Activated T-helper 2 cell treated with anti-CD3 and anti-CD28 coated beads, Interferon-gamma antibody, Interleukin-2, Interleukin-4, amounts not matched to agents 10 μg/mL and 5 μg/mL and 100 μg/mL, durations not matched to agents 14 hours and 24 hours and 36 hours (primary cell): ENCODE measurements at regions of chr1 and their contacts with region 1.

Region 1: GRCh38 chr1:156421062-156421938 is 52.3 kb downstream of the RHBG start:
- DNase-seq: peak; percentile 66
- H3K4me3 Mint-ChIP-seq: peak overlapping the region; percentile 59
- H3K27ac Mint-ChIP-seq: no peak overlapping the region
- H3K4me1 Mint-ChIP-seq: peaks cover 14% of the 10 kb centered on the region
- H3K27me3 Mint-ChIP-seq: peaks cover 86% of the 10 kb centered on the region

Region 2: DNA sequence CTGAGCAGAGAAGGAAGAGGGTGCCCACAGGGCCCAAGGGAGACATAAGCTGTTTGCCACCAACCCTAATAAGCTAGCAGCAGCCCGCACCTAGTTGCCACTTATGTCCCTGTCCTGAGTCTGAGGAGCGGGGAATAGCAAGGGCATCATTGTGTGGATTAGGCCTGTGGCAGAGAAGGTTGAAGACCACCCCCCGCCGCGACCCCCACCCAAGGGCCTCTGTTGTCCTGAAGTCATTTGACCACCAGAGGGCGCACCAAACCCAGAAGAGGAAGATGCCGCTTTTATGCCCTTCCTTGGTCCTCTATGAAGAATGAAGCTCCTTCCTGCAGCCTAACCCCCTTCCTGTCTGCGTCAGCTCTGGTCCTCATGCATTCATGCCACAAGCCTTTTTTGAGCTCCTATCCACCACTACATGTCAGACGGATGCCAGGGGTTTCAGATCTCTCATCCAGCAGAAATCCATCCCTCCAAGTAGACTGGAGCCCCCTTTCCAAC is 35.7 kb before region 1 on chr1:
- intact Hi-C with region 1: loop called (anchors 5 kb)
- DNase-seq: peak; percentile 61
- H3K4me3 Mint-ChIP-seq: no peak overlapping the region
- H3K27ac Mint-ChIP-seq: no peak overlapping the region
- H3K4me1 Mint-ChIP-seq: peaks cover 4% of the 10 kb centered on the region
- H3K27me3 Mint-ChIP-seq: peaks cover 34% of the 10 kb centered on the region

Region 3: DNA sequence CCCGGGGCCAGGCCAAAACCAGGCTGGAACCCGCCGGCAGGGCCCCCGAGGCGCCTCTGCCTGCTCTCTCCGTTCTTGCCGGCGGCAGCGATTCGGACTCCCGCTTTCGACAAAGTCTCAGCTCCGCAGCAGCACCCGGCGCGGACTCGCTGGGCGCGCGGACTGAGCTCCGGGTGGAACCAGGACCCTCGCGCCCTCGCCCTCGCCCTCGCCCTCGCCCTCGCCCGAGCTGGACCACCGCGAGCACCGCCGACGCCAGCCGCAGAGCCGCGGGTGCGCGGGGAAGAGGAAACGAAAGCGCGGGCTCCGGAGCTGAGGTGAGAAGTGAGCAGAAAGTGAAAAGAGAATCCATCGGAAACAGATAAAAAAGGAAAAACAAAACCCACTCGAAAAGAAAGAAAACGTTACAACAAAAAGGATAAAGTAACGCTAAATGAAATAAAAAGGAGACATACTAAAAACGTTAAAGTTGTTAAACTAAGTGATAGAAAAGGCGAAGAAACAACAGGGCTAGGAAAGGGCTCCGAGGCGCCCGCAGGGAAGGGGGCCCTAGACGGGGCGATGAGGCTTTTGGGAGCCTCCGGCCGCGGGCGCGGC is 14.3 kb after region 1 on chr1:
- intact Hi-C with region 1: loop called (anchors 2 kb)
- DNase-seq: peak; percentile 15
- H3K4me3 Mint-ChIP-seq: peak overlapping the region; percentile 70
- H3K27ac Mint-ChIP-seq: peak overlapping the region; percentile 36
- H3K4me1 Mint-ChIP-seq: peaks cover 40% of the 10 kb centered on the region
- H3K27me3 Mint-ChIP-seq: peaks cover 82% of the 10 kb centered on the region